ENCODE measurements at regions of chr15 and their contacts with region 1.

Region 1: DNA sequence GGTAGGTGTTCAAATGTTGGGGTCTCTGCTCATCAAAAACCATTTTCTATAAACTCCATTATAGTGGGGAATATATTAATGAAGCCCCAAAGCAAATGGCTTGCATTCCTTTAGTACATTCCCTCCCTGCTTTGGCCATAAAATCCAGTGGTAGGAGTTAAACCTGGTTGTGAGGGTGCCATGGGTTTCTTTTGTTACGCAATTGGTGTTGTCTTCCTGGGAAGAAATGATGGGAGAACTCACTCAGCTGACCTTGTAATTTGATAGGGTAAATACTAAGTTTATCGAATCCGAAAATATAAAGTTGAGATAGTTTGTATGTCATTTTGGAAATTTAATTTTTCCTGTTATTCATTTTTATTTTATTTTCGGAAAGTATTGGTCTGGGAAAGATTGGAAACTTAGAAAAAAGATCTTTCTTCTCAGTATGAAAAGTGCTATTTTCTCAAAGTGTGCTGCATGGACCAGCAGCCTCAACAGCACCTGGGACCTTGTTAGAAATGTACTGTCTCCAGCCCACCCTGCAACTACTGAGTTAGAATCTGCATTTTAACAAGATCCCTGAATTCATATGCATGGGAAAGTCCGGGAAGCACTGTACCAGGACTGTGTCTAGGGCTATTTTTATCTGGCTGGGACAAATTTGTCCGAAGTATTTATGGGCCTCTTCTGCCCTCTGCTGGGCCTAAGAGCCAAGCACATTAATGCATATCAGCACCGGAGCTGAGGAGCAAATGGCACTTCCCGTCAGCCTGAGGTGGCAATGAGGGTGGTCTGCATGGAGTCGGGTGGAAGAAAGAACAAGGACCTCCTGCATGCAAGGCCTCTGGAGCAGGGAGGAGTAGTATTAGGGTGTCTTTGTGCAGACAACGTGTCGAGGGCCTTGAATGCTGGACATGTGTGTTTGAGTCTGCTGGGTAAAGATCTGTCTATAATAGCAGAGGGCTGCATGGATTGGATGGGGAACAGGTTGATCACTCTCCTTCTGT is 54.7 kb downstream of the FAM81A start:
- DNase-seq: peak; percentile 7
- H3K4me3 ChIP-seq: no peak overlapping the region
- CTCF ChIP-seq: peak; percentile 76

Region 2: DNA sequence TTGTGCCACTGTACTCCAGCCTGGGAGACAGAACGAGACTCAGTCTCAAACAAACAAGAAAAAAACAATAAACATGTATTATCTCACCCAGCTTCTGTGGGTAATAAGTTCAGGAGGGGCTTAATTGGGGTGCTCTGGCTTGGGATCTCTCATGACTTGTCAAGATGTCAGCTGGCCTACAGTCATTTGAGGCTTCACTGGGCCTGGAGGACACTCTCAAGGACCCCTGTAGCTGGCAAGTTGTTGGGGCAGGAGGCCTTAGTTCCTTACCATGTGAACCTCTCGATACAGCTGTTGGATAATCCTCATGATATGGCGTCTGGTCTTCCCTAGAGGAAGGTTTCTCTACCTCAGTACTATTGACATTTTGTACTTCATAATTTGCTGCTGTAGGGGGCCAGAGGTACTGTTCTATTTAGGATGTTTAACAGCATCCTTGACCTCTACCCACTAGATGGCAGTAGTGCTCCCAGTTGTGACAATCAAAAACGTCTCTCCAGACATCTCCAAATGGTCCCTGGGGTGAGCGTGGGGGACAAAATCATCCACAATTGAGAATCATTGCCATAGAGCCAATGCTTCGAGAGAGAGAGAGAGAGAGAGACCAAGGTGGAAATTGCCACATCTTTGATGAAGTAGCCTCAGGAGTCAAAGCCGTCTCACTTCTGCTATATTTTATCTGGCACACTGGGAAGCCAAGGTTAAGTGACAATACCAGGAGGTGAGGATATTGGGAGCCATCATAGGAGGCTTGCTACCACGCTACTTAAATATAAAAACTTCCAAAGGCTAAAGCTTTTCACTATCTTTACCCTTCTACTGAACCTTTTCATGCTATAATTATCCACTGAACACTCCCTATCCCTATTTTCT is 535.3 kb before region 1 on chr15:
- CTCF ChIA-PET with region 1: interaction called, 12 read pairs
- POLR2A ChIA-PET with region 1: no interaction called
- DNase-seq: no peak
- H3K4me3 ChIP-seq: no peak overlapping the region
- CTCF ChIP-seq: peak; percentile 74

Region 3: GRCh38 chr15:58980351-58980939 is 512.2 kb before region 1 on chr15:
- CTCF ChIA-PET with region 1: interaction called, 32 read pairs
- POLR2A ChIA-PET with region 1: no interaction called
- DNase-seq: no peak
- H3K4me3 ChIP-seq: no peak overlapping the region
- CTCF ChIP-seq: peak; percentile 21

Region 4: GRCh38 chr15:59174835-59175831 is 317.6 kb before region 1 on chr15:
- CTCF ChIA-PET with region 1: interaction called, 15 read pairs
- POLR2A ChIA-PET with region 1: no interaction called
- DNase-seq: no peak
- H3K4me3 ChIP-seq: no peak overlapping the region
- CTCF ChIP-seq: peak; percentile 73

Region 5: DNA sequence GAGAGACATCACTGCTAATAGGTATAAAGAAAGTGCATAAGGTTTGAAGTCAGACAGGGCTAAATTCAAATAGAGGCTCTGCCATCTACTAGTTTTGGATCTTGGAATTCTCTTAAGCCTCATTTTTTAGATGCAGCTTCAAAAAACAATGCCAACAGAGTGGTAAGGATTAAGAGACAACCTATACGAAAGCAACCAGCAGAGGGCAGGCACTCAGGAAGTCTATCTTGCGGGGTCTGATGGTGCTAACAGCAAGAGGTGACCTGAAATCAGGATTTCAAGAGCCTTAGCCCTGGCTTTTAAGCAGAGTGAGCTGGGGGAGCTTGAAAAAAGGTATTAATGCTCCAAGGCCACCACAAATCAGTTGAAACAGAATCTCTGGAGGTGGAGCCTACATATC is 245.3 kb before region 1 on chr15:
- CTCF ChIA-PET with region 1: interaction called, 25 read pairs
- POLR2A ChIA-PET with region 1: no interaction called
- DNase-seq: no peak
- H3K4me3 ChIP-seq: no peak overlapping the region
- CTCF ChIP-seq: peak; percentile 71

Region 6: DNA sequence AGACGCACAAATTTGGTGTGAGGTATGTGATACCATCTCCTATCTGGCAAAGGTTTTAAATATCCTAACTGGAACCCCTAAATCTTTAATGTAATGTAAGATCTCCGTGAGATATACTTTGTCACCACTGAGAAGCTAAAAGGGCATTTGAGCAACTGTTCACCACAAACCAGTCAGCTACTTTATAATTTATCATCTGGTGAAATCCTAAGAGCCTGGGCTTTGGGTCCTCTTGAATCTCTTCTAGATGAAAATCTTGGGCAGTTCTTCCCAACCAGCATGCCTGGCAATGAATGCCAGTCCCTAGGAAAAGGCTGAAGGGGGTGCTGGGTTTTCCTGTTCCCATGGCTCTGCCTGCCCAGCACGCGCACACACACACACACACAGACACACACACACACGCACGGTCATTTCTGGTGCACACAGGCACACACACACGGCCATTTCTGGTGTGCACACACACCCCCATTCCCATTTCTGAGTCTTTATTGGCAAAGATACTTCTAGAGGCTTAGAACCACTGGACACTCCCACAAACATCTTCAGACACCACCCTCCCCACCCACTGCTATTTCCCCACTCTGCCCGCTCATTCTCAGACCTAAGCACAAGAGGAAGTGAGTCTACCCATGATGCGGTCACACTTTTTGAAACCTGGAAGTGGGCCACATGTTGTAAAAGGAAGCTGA is 192.6 kb before region 1 on chr15:
- CTCF ChIA-PET with region 1: no interaction called
- POLR2A ChIA-PET with region 1: no interaction called
- DNase-seq: peak; percentile 84
- H3K4me3 ChIP-seq: no peak overlapping the region
- CTCF ChIP-seq: no peak

Region 7: GRCh38 chr15:59327942-59328341 is 164.7 kb before region 1 on chr15:
- CTCF ChIA-PET with region 1: no interaction called
- POLR2A ChIA-PET with region 1: no interaction called
- DNase-seq: no peak
- H3K4me3 ChIP-seq: no peak overlapping the region
- CTCF ChIP-seq: no peak

Region 8: GRCh38 chr15:59434481-59434880 is 58.2 kb before region 1 on chr15:
- CTCF ChIA-PET with region 1: no interaction called
- POLR2A ChIA-PET with region 1: no interaction called
- DNase-seq: no peak
- H3K4me3 ChIP-seq: no peak overlapping the region
- CTCF ChIP-seq: no peak

Region 9: GRCh38 chr15:59473226-59473625 is 19.5 kb before region 1 on chr15:
- CTCF ChIA-PET with region 1: interaction called, 10 read pairs
- POLR2A ChIA-PET with region 1: no interaction called
- DNase-seq: no peak
- H3K4me3 ChIP-seq: no peak overlapping the region
- CTCF ChIP-seq: no peak

Region 10: DNA sequence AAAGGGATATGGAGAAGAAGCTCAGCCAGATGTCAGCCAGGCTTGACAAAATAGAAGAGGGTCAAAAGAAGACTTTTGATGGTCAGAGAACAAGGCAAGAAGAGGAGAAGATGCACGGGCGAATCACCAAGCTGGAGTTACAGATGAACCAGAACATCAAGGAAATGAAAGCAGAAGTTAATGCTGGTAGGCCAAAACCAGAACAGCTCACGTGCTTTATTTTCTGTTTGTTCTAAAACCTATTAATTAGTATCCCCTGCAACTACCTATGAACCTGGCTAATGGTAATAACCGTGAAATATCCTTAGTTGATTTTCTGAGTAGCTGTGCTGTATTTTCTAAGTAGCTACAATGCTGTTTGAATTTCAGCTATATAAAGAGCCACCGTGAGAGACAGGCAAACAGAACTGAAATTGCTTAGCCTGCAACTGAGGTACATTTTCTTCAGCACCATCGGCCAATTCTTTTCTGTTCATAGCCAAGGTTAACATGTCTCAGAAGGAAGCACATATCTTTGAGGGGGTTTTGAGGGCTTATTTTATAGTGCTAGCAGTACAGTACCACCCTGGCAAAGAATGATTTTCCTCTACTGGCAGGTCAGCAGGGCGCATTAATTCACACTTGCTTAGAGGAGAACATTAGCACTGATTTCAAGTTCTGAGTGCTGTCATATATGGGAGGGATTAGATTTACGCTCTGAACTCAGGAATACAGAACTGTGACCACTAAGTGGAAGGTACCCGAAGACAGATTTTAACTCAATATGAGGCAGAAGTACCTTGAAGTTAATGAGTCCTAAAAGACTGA is 24.2 kb after region 1 on chr15:
- CTCF ChIA-PET with region 1: interaction called, 12 read pairs
- POLR2A ChIA-PET with region 1: no interaction called
- DNase-seq: no peak
- H3K4me3 ChIP-seq: no peak overlapping the region
- CTCF ChIP-seq: no peak